ENCODE measurements at regions of chr15 and their contacts with region 1.

Region 1: DNA sequence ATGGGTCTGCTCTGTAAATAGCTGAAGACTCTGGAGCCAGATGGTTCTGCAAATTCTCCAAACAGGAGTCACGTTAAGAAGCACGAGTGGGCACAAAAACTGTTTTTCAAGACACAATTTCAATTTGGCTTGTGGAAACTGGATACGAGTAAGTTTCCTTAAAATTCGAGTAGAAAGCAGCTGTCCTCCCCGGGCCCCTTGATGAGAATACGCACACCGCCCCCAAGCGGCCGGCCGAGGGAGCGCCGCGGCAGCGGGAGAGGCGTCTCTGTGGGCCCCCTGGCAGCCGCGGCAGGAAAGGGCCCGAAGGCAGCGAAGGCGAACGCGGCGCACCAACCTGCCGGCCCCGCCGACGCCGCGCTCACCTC is 778 bp upstream of the THBS1 start:
- DNase-seq: peak; percentile 93
- ATAC-seq: peak; percentile 90
- H3K4me3 Mint-ChIP-seq: peak overlapping the region; percentile 53
- H3K27ac Mint-ChIP-seq: no peak overlapping the region
- H3K4me1 Mint-ChIP-seq: peaks cover 13% of the 10 kb centered on the region
- H3K27me3 Mint-ChIP-seq: peaks cover 55% of the 10 kb centered on the region

Region 2: GRCh38 chr15:38817427-38818156 is 762.5 kb before region 1 on chr15:
- CTCF ChIA-PET with region 1: interaction called, 4 read pairs
- POLR2A ChIA-PET with region 1: no interaction called
- intact Hi-C with region 1: loop called (anchors 1 to 5 kb)
- DNase-seq: peak; percentile 90
- ATAC-seq: peak; percentile 96
- H3K4me3 Mint-ChIP-seq: no peak overlapping the region
- H3K27ac Mint-ChIP-seq: no peak overlapping the region
- H3K4me1 Mint-ChIP-seq: peaks cover 5% of the 10 kb centered on the region
- H3K27me3 Mint-ChIP-seq: peaks cover 8% of the 10 kb centered on the region

Region 3: GRCh38 chr15:39171944-39172368 is 408.1 kb before region 1 on chr15:
- CTCF ChIA-PET with region 1: interaction called, 4 read pairs
- POLR2A ChIA-PET with region 1: no interaction called
- intact Hi-C with region 1: loop called (anchors 1 to 2 kb)
- DNase-seq: peak; percentile 60
- ATAC-seq: peak; percentile 63
- H3K4me3 Mint-ChIP-seq: no peak overlapping the region
- H3K27ac Mint-ChIP-seq: no peak overlapping the region
- H3K4me1 Mint-ChIP-seq: no peaks in the 10 kb centered on the region
- H3K27me3 Mint-ChIP-seq: peaks cover 21% of the 10 kb centered on the region

Region 4: GRCh38 chr15:39358441-39359041 is 221.6 kb before region 1 on chr15:
- CTCF ChIA-PET with region 1: interaction called, 3 read pairs
- POLR2A ChIA-PET with region 1: no interaction called
- intact Hi-C with region 1: loop called in 1 of 2 experiments (anchors 5 kb)
- DNase-seq: no peak
- ATAC-seq: no peak
- H3K4me3 Mint-ChIP-seq: no peak overlapping the region
- H3K27ac Mint-ChIP-seq: no peak overlapping the region
- H3K4me1 Mint-ChIP-seq: no peaks in the 10 kb centered on the region
- H3K27me3 Mint-ChIP-seq: peaks cover 13% of the 10 kb centered on the region

Region 5: GRCh38 chr15:39874890-39875549 is 294.9 kb after region 1 on chr15:
- CTCF ChIA-PET with region 1: no interaction called
- POLR2A ChIA-PET with region 1: no interaction called
- intact Hi-C with region 1: loop called in 1 of 2 experiments (anchors 5 kb)
- DNase-seq: peak; percentile 48
- ATAC-seq: no peak
- H3K4me3 Mint-ChIP-seq: no peak overlapping the region
- H3K27ac Mint-ChIP-seq: no peak overlapping the region
- H3K4me1 Mint-ChIP-seq: peaks cover 10% of the 10 kb centered on the region
- H3K27me3 Mint-ChIP-seq: peaks cover 2% of the 10 kb centered on the region

Measured in activated CD4-positive, alpha-beta T cell treated with anti-CD3 and anti-CD28 coated beads for 36 hours (primary cell).